ENCODE measurements at regions of chr14 and their contacts with region 1.

Region 1: GRCh38 chr14:102928412-102929240 is 6.2 kb downstream of the AMN start:
- DNase-seq: peak; percentile 55 to 90 (median 87)
- ATAC-seq: peak; percentile 94
- H3K4me3 ChIP-seq: peak overlapping the region; percentile 51 to 70
- H3K4me3 Mint-ChIP-seq: peak overlapping the region; percentile 79
- H3K27ac ChIP-seq: no peak overlapping the region
- H3K27ac Mint-ChIP-seq: peak overlapping the region; percentile 10
- H3K4me1 ChIP-seq: peaks cover 30% of the 10 kb centered on the region
- H3K4me1 Mint-ChIP-seq: peaks cover 13% of the 10 kb centered on the region
- H3K27me3 ChIP-seq: peaks cover 8 to 24% of the 10 kb centered on the region in 2 experiments
- H3K27me3 Mint-ChIP-seq: peaks cover 13% of the 10 kb centered on the region
- CTCF ChIP-seq: no peak

Region 2: GRCh38 chr14:102949062-102949800 is 20.6 kb after region 1 on chr14:
- CTCF ChIA-PET with region 1: no interaction called
- POLR2A ChIA-PET with region 1: interaction called, 3 read pairs
- intact Hi-C with region 1: loop called in 1 of 2 experiments (anchors 2 kb)
- DNase-seq: peak in 8 of 9 experiments; percentile 23 to 79 (median 45)
- ATAC-seq: peak; percentile 82
- H3K4me3 ChIP-seq: peak overlapping the region in 1 of 2 experiments; percentile 30
- H3K4me3 Mint-ChIP-seq: peak overlapping the region; percentile 23
- H3K27ac ChIP-seq: peak overlapping the region; percentile 39 to 60
- H3K27ac Mint-ChIP-seq: peak overlapping the region; percentile 53
- H3K4me1 ChIP-seq: peaks cover 26% of the 10 kb centered on the region
- H3K4me1 Mint-ChIP-seq: peaks cover 26% of the 10 kb centered on the region
- H3K27me3 ChIP-seq: no peaks in the 10 kb centered on the region
- H3K27me3 Mint-ChIP-seq: no peaks in the 10 kb centered on the region
- CTCF ChIP-seq: no peak

Region 3: DNA sequence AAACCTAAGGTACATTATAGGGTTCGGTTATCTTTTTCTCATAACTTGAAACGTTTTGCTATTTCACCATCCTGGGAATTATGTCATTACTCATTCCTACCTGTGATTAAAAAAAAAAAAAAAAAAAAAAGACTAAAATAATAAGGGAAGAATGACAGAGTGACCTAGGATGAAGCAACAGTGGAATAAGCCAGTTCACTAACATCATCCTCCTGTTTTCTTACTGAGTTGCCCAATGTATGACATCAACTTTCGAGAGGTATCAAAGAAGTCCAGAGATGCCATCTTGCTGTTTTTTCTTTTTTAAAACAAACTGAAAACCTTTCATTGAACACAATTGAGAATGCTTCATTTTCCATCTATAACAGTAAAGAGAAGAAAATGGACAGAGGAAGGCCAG is 36.7 kb after region 1 on chr14:
- CTCF ChIA-PET with region 1: no interaction called
- POLR2A ChIA-PET with region 1: no interaction called
- intact Hi-C with region 1: no loop called
- DNase-seq: no peak
- ATAC-seq: no peak
- H3K4me3 ChIP-seq: no peak overlapping the region
- H3K4me3 Mint-ChIP-seq: no peak overlapping the region
- H3K27ac ChIP-seq: no peak overlapping the region
- H3K27ac Mint-ChIP-seq: no peak overlapping the region
- H3K4me1 ChIP-seq: no peaks in the 10 kb centered on the region
- H3K4me1 Mint-ChIP-seq: no peaks in the 10 kb centered on the region
- H3K27me3 ChIP-seq: no peaks in the 10 kb centered on the region
- H3K27me3 Mint-ChIP-seq: no peaks in the 10 kb centered on the region
- CTCF ChIP-seq: no peak

Measured in CD8-positive, alpha-beta T cell (primary cell).